ENCODE measurements at regions of chr10 and their contacts with region 1.

Region 1: DNA sequence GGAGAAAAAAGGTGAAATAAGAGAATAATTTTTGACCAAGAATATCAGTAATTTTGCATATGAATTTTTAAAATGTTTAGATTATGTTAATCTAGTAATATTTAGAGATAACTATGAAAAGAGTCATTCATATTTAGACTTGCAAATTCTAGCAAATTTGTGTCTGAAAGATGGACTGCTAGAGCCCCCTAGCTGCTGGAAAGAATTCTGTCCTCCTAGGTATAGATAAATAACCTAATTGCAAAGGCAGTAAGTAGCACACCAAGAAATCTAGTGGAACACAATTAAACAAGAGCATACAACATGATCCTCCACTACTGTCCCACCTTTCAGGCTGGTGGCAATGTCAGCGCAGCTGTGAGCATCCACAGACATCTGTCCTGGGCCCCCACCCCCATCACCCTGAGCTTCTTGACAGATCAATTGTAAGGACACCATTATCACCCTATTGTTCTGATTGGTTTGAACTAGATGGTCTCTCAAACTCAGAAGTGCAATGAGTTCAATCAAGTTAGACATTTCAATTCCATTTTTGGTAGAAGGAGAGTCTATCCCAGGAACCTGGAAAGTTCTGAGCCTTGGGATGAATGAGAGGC is 15.0 kb upstream of the GFRA1 start:
- DNase-seq: peak; percentile 7
- H3K4me3 ChIP-seq: no peak overlapping the region
- H3K27ac ChIP-seq: no peak overlapping the region
- H3K27me3 ChIP-seq: no peaks in the 10 kb centered on the region
- CTCF ChIP-seq: peak; percentile 78

Region 2: GRCh38 chr10:115432188-115432775 is 855.7 kb before region 1 on chr10:
- CTCF ChIA-PET with region 1: interaction called, 14 read pairs
- POLR2A ChIA-PET with region 1: no interaction called
- DNase-seq: no peak
- H3K4me3 ChIP-seq: no peak overlapping the region
- H3K27ac ChIP-seq: no peak overlapping the region
- H3K27me3 ChIP-seq: no peaks in the 10 kb centered on the region
- CTCF ChIP-seq: peak; percentile 37

Region 3: GRCh38 chr10:115706026-115706781 is 581.8 kb before region 1 on chr10:
- CTCF ChIA-PET with region 1: interaction called, 151 read pairs
- POLR2A ChIA-PET with region 1: no interaction called
- DNase-seq: no peak
- H3K4me3 ChIP-seq: no peak overlapping the region
- H3K27ac ChIP-seq: no peak overlapping the region
- H3K27me3 ChIP-seq: no peaks in the 10 kb centered on the region
- CTCF ChIP-seq: peak; percentile 57

Region 4: DNA sequence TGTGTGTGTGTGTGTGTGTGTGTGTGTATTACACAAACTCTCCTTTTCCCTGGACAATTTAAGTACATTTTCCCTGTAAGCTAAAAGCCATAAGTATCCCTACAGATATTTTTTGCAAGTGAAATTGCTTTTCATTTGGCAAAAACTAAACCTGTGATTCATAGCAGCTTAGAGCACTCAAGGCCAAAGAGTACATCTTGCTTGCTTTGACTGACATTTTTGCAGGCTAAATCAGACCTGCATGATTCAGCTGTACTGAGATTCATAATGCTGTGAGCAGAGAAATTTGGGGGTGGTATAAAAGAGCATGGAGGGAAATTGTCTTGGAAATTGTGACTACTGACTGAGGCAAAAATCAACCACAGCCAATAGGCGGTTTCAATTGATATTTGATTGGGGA is 515.4 kb before region 1 on chr10:
- CTCF ChIA-PET with region 1: interaction called, 10 read pairs
- POLR2A ChIA-PET with region 1: no interaction called
- DNase-seq: peak; percentile 27
- H3K4me3 ChIP-seq: no peak overlapping the region
- H3K27ac ChIP-seq: no peak overlapping the region
- H3K27me3 ChIP-seq: no peaks in the 10 kb centered on the region
- CTCF ChIP-seq: no peak

Region 5: GRCh38 chr10:115790220-115790619 is 497.8 kb before region 1 on chr10:
- CTCF ChIA-PET with region 1: interaction called, 18 read pairs
- POLR2A ChIA-PET with region 1: no interaction called
- DNase-seq: no peak
- H3K4me3 ChIP-seq: no peak overlapping the region
- H3K27ac ChIP-seq: no peak overlapping the region
- H3K27me3 ChIP-seq: no peaks in the 10 kb centered on the region
- CTCF ChIP-seq: no peak

Region 6: GRCh38 chr10:115801992-115802391 is 486.0 kb before region 1 on chr10:
- CTCF ChIA-PET with region 1: interaction called, 130 read pairs
- POLR2A ChIA-PET with region 1: no interaction called
- DNase-seq: no peak
- H3K4me3 ChIP-seq: no peak overlapping the region
- H3K27ac ChIP-seq: no peak overlapping the region
- H3K27me3 ChIP-seq: no peaks in the 10 kb centered on the region
- CTCF ChIP-seq: no peak

Region 7: DNA sequence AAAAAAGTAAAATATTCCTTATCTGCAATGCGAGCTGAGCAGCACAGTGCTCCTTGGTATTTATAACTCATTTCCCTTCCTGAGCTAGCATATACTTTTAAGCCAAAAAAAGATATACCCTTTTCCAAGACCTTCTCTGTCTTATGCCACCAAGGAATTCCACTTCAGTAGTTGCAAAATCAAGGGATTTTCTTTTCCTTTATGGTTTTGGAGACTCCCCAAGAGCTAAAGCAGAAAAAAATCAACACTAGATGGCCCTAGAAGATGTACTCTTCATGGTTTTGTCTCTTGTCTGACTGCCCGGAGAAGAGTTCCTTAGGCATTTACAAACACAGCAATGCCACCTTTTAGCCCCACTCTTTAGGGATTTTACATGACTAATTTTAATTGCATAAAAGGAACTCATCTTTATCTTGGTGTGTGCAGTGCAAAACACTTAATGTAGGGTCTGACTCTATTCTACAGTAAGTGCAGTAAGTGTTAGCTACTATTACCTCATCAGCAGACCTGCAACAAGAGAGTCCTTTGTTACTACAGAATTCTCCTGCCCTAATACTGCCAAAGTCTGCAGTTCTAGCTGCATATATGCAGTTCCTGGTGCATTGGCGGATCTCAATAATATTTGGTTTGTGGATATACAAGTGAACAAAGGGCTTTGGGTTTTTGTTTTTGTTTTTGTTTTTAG is 458.3 kb before region 1 on chr10:
- CTCF ChIA-PET with region 1: interaction called, 25 read pairs
- POLR2A ChIA-PET with region 1: no interaction called
- DNase-seq: no peak
- H3K4me3 ChIP-seq: no peak overlapping the region
- H3K27ac ChIP-seq: no peak overlapping the region
- H3K27me3 ChIP-seq: no peaks in the 10 kb centered on the region
- CTCF ChIP-seq: peak; percentile 39

Region 8: DNA sequence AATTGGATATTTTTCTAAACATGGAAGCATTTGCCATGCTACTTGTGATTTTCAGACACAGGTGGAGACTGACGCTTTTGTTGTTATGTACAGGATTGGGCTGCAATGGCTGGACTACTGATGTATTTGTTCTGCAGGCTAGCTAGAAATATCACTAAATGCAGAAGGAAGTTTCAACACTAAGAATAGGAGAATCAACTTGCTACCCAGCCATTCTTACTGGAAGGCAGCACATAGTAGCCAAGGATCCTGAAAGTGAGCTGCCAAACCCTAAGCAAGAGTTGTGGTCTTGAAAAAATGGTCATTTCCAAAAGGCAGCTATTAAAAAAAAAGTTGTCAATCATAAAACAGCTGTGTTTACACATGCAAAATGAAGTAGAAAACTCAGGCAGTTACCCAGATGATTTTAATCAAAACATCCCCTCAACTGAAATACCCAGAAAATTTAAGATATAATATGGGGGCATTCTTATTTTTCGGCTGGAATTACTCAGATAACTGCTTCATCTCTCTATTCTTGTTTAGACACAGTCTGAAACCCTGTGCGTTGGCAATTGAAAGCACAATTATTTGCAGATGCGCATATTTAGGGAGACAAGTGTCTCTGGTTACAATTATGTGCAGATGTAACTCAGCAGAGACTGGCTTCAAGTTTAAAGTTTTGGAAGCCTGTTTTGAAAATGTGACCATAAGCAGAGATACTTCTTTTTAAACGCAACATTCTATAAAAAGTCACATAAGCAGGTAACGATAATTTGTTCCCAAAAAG is 46.2 kb before region 1 on chr10:
- CTCF ChIA-PET with region 1: no interaction called
- POLR2A ChIA-PET with region 1: no interaction called
- DNase-seq: no peak
- H3K4me3 ChIP-seq: no peak overlapping the region
- H3K27ac ChIP-seq: no peak overlapping the region
- H3K27me3 ChIP-seq: no peaks in the 10 kb centered on the region
- CTCF ChIP-seq: no peak